ENCODE measurements at regions of chr21 and their contacts with region 1.

Region 1: GRCh38 chr21:44338971-44339910 is at the start of gene CFAP410:
- DNase-seq: peak; percentile 94
- ATAC-seq: peak; percentile 91
- H3K4me3 ChIP-seq: peak within 1 kb of the TSS; percentile 96
- H3K27ac ChIP-seq: peak within 1 kb of the TSS; percentile 97
- H3K4me1 ChIP-seq: peaks cover 6% of the 10 kb centered on the region
- H3K27me3 ChIP-seq: no peaks in the 10 kb centered on the region
- CTCF ChIP-seq: no peak
- POLR2A ChIP-seq: peak; percentile 93
- RAD21 ChIP-seq: 0 out of 2 replicates have a peak, but pooled peaks have one; percentile 1
- total RNA-seq, gene CFAP410: 3.3 and 3.8 TPM in 2 replicates

Region 2: DNA sequence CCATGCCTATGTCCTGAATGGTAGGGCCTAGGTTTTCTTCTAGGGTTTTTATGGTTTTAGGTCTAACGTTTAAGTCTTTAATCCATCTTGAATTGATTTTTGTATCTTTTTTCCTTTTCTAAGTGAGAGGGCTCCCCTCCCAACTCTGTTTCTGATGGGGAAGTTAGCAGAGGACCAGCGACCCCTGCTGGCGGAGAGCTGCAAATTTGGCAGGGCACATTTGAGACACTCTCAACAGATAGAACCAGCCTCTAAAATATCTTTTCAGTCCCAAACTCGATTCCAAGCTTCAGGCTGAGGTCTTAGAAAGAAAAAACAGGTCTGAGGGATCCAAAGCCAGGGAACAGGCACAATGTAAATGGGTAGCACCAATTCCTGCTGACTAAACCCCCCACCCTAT is 148.6 kb after region 1 on chr21:
- CTCF ChIA-PET with region 1: no interaction called
- POLR2A ChIA-PET with region 1: no interaction called
- dilution Hi-C with region 1: no loop called
- in situ Hi-C with region 1: no loop called
- intact Hi-C with region 1: loop called (anchors 10 kb)
- DNase-seq: peak; percentile 19
- ATAC-seq: peak; percentile 53
- H3K4me3 ChIP-seq: no peak overlapping the region
- H3K27ac ChIP-seq: no peak overlapping the region
- H3K4me1 ChIP-seq: no peaks in the 10 kb centered on the region
- H3K27me3 ChIP-seq: peaks cover 5% of the 10 kb centered on the region
- CTCF ChIP-seq: peak; percentile 52
- POLR2A ChIP-seq: no peak
- RAD21 ChIP-seq: peak; percentile 39